BJ (cell line): ENCODE measurements at regions of chr6 and their contacts with region 1.

Region 1: GRCh38 chr6:2765166-2765895 is at the start of gene WRNIP1:
- DNase-seq: peak; percentile 96
- H3K4me3 ChIP-seq: peak within 1 kb of the TSS; percentile 90
- H3K27me3 ChIP-seq: no peaks in the 10 kb centered on the region
- CTCF ChIP-seq: no peak; the same call in 1 of the 2 replicates
- polyA plus RNA-seq, gene WRNIP1: 23.9 and 26.5 TPM in 2 replicates

Region 2: DNA sequence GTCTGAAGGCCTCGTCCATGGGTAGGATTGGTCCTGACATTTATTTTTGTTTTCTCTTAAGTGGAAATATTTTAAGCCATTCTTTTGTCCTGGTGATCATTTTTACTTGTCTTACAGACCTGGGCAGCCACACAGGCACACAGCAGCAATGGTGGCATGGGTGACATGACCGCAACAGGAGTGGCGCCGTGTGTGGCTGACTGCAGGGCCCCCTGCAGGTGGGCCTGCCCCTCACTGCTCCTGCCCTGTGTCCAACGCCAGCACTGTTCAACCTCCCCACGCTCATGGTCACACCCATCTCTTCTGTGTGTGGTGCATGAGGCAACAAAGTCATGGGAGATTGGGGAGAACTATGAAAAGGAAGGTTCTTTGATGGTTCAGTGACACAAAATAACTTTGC is 166.5 kb before region 1 on chr6:
- CTCF ChIA-PET with region 1: no interaction called
- POLR2A ChIA-PET with region 1: no interaction called
- DNase-seq: no peak
- H3K4me3 ChIP-seq: no peak overlapping the region
- H3K27me3 ChIP-seq: no peaks in the 10 kb centered on the region; the same call in 1 of the 2 replicates
- CTCF ChIP-seq: no peak

Region 3: DNA sequence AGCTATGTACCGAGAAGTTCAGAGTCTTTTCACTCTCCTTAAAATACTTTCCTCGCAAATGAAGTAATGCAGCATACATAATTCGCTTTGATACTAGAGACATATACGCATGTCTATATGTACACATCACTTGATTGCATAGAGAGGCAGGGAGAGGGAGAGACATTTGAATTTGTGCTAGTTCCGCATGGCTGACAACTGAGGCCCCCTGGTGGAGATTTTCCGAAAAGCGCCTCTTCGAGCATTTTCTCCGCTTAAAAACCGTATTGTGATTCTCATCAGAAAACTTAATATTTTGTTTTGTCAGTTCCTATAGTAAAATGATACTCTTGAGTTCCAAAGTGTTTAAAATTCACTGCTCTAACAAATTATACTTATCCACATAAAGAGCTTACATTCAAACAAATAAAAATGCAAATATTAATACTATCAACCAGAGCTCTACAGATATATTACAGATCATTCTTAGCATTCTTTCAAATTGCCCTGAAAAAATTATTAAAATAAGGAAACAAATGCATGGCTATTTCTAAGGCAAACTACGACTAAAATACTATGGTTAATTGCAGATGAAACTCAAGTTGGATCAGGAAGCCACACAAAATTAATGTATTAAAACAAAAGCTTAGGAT is 15.2 kb before region 1 on chr6:
- CTCF ChIA-PET with region 1: interaction called, 81 read pairs
- POLR2A ChIA-PET with region 1: no interaction called
- DNase-seq: no peak
- H3K4me3 ChIP-seq: no peak overlapping the region
- H3K27me3 ChIP-seq: no peaks in the 10 kb centered on the region
- CTCF ChIP-seq: peak; percentile 86

Region 4: DNA sequence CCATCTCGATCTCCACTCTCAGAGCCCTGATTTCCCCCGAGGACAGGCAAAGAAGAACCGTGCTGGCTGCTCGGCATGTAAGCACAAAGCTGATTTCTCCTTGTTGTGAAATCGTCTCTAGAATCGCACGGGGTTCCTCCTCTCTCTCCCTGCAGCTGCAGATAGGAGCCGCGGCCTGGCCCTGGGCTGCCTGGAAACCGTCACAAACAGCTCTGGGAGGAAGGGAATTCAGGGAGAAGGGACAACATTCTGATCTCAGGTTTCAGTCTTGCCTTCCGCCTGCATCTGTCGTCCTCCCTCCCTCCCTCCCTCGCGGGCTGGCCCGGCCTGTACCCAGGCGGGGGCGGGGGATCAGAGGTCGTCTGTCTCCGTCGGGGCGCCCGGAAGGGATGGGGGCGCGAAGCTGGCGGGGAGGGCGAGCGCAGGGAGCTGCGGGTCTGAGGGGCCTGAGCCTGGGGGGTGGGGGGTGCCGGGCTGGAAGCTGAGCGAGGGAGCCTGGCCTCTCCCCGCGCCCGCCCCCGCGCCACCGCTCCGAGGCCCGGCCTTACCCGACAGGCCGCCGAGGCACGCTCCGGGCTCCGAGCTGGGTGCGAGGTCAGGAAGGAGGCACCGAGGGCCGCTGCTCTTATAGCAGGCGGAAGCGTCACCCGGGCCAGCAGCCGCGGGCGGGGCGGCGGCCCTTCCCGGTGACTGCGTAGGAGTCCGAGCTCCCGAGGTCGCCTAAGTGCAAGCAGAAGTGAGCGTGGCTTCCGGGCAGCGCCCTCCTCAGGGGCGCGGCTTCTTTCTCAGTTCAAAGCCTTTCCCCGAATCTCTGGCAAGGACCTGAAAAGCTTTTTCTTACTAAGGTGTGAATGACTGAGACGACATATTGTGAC is 76.2 kb after region 1 on chr6 and contains the start of gene SERPINB1:
- CTCF ChIA-PET with region 1: interaction called, 14 read pairs
- POLR2A ChIA-PET with region 1: no interaction called
- DNase-seq: peak; percentile 84
- H3K4me3 ChIP-seq: peak within 1 kb of the TSS; percentile 55
- H3K27me3 ChIP-seq: no peaks in the 10 kb centered on the region
- CTCF ChIP-seq: no peak
- polyA plus RNA-seq, gene SERPINB1: 17.9 and 31.3 TPM in 2 replicates